Posterior cingulate gyrus (tissue), 11 donors: ENCODE measurements at regions of chr9 and their contacts with region 1.

Region 1: DNA sequence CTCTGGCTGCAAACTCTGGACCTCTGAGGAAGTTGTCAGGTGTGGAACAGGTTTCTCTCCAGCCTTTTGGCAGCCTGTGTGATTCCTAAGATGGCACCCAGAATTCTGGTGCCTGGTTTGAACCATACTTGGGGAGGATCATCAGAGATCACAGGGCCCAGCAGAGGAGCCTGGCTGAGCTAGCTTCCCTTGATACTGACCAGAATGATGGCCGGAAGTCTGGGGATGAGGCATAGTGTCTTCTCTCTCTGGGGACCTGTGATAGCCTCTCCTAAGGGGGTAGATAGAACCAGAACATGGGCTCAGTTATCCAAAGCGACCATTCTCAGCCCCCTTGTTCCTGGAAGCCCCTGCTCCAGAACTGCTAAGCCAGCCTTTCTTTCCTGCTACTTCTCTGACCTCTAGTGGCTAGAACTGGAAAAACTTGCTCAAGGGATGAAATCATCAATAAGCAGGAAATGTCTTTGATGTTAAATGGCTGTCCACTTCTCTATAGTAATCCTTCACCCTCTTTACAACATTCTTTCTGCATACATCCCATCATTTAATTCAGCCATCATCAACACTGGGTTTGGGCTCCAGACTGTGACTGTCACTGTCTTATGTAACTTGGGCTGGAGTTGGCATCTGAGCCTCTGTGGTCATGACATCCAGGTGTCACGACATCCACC is 55.1 kb downstream of the C9orf152 start:
- DNase-seq: peak in 1 of 10 donors; percentile 27

Region 2: DNA sequence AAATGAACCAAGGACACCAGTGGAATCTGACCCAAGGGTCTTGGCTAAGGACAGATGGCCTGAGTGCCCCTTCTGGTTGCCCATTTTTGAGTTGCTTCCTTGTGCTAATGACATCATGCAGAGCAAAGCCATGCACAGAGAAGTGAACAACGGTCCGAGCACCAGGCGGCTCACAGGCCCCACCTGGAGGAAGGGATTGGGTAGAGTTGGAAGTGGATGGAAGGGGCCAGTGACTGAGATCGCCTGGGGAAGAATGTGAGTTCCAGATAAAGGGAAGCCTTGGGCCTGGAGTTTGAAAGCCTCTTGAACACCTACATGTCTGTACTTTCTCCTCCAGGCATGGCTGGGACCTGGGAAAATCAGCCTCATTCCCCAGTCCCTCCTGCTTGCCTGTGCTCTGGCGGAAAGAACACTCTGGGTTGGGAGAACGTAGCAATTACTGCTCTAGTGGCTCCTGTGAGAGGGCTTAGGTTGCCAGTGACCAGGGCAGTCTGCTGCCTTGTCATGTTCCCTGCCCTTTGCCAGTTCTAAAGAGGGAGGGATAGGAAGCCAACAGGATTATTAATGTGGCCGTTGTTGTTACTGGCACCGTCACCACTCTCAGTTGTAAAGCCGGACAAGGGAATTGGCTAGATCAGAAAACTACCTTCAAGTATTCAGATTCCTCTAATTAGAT is 592.2 kb before region 1 on chr9:
- intact Hi-C with region 1: loop called (anchors 5 kb)
- DNase-seq: peak in 1 of 10 donors; percentile 11

Region 3: DNA sequence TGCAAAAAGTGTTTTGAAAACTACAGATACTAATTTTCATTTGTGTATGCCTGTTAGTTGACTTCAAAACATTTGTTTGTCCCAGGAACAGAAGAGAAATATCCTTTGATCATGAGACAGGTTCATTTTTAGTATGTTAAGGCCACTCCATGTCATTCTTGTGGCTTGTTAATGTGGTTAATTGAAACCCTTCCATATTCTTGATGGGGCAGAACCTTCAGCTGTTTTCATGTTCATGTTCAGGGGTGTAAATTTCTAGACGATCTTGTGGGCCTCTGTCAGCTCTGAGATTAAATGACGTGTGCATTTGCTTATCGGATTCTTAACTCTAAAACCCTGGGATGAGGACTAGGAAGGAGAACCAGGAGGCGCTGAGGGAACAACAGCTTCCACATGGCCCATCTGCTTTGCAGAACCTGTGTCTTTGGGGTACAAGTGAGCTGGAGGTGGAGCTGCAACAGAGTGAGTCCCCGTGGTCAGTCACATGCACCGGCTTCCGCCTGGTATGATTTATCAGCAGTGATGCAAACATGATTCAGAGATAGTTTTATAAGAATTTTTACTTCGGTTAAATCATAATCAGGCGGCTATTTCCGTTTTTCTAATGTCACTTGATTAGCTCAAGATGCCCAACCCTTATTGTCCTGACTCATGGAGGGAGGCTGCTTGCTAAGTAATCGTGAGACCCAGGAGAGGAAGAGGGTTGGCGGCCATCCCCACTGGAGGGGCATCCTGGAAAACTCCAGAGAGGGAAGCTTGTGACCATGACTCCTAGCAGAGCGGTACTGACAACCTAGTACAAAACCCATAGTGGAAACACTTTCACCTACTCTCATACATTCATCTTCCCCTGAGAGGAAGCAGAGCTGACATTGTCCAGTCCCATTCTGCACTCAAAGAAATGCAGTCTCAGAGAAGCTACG is 83.3 kb before region 1 on chr9:
- intact Hi-C with region 1: loop called (anchors 5 kb)
- DNase-seq: no peak

Region 4: GRCh38 chr9:110095776-110096175 is 57.1 kb before region 1 on chr9:
- intact Hi-C with region 1: no loop called
- DNase-seq: no peak

Region 5: GRCh38 chr9:110351009-110351467 is 198.2 kb after region 1 on chr9:
- intact Hi-C with region 1: no loop called
- DNase-seq: no peak